Activated T-helper 1 cell treated with anti-CD3 and anti-CD28 coated beads, Interleukin-12 subunit alpha, Interleukin-12 subunit beta, Interleukin-2, Interleukin-4 antibody, amounts not matched to agents 30 ng/mL and 10 ng/mL and 1 ng/mL, durations not matched to agents 14 hours and 24 hours and 36 hours (primary cell): ENCODE measurements at regions of chr1 and their contacts with region 1.

Region 1: GRCh38 chr1:109161858-109162606 is 48.1 kb downstream of the ELAPOR1 start:
- DNase-seq: peak; percentile 52
- H3K4me3 Mint-ChIP-seq: peak overlapping the region; percentile 47
- H3K27ac Mint-ChIP-seq: peak overlapping the region; percentile 71
- H3K4me1 Mint-ChIP-seq: peaks cover 30% of the 10 kb centered on the region
- H3K27me3 Mint-ChIP-seq: peaks cover 2% of the 10 kb centered on the region

Region 2: GRCh38 chr1:109011335-109011734 is 150.7 kb before region 1 on chr1:
- intact Hi-C with region 1: no loop called
- DNase-seq: no peak
- H3K4me3 Mint-ChIP-seq: no peak overlapping the region
- H3K27ac Mint-ChIP-seq: no peak overlapping the region
- H3K4me1 Mint-ChIP-seq: no peaks in the 10 kb centered on the region
- H3K27me3 Mint-ChIP-seq: no peaks in the 10 kb centered on the region

Region 3: DNA sequence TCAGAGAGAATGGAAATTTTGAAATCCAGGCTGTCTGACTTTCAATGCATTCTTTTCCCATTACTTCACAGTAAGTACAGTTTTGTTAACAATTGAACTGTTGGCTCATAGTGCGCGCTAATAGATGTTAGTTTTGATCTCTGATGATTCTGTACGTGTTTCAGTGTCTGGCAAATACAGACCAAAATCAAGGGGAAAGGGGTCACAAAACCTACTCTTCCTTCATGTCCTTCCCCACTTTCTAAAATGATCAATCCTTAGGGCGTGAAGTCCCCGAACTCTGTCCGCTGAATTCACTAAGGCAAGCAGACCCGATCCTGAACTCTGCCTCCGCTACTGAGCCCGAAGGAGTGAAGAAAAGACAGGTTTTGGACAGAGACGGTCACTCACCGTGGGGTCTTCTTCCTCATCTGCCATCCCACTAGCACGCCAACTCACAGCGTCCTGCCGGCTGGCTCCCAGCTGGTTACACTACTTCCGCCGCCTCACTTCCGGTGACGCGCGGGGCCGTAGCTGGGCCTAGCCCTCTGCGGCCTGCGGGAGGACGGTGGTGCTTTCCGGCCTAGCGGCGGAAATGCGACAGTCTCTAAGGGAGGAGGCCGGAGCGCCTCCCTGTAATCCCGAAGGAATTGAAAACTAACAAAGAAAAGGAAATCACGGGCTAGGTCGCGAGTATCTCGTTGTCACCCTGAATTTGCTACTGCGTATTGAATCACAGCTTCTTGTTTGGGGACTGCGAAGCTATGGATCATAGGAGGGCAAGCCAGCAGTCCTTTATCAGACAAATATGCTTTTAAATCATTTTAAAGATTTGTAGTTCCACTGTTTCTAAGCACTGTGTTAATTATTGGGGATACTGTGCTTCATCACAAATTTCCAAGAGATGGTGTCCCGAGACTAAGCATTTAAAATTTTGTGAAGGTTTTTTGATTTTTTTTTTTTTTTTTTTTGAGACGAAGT is 86.2 kb before region 1 on chr1 and contains the start of gene TAF13:
- intact Hi-C with region 1: loop called (anchors 1 kb)
- DNase-seq: peak; percentile 87
- H3K4me3 Mint-ChIP-seq: peak within 1 kb of the TSS; percentile 99
- H3K27ac Mint-ChIP-seq: peak within 1 kb of the TSS; percentile 88
- H3K4me1 Mint-ChIP-seq: peaks cover 20% of the 10 kb centered on the region
- H3K27me3 Mint-ChIP-seq: peaks cover 1% of the 10 kb centered on the region
- total RNA-seq, gene TAF13: 28.8 and 32.6 TPM in 2 replicates

Region 4: GRCh38 chr1:109099938-109100773 is 61.9 kb before region 1 on chr1:
- intact Hi-C with region 1: loop called (anchors 2 kb)
- DNase-seq: peak; percentile 95
- H3K4me3 Mint-ChIP-seq: peak overlapping the region; percentile 97
- H3K27ac Mint-ChIP-seq: peak overlapping the region; percentile 98
- H3K4me1 Mint-ChIP-seq: peaks cover 10% of the 10 kb centered on the region
- H3K27me3 Mint-ChIP-seq: no peaks in the 10 kb centered on the region

Region 5: DNA sequence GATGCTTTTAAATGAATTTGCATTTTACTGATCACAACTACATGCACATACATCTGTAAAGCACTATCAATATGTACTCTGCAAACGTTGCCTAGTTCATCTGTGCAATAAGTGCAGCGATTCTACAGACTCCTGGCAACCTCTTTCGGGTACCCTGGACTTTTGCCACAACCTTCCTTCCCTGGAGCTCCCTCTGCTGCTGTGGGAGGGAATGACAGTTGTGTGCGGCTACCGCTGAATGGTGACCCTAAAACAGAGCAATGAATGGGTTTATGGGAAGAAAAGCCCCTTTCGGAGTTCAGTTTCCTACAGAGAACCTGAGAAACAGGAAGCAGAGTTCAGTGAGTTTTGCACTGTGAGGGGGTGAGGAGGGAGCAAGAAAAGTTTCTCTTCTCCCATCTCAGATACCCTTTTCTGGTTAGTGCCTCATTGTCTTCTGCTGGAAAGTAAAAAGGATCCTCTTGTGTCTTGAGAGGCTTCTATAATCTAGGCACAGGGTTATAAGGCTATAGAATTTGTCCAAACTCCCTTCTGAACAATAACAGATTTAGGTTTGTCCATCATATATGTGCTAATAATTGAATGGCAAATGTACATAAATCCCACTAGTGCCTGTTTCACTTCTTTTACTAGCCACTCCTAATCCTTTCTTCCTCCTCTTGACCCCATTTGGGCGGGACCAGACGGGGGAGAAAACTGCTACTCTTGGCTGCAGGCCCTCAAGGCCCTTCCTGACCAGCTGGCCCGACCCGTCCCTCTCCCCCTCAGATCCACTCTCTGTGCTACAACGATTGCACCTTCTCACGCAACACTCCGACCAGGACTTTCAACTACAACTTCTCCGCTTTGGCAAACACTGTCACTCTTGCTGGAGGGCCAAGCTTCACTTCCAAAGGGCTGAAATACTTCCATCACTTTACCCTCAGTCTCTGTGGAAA is 31.9 kb after region 1 on chr1:
- intact Hi-C with region 1: loop called (anchors 2 kb)
- DNase-seq: peak; percentile 55
- H3K4me3 Mint-ChIP-seq: no peak overlapping the region
- H3K27ac Mint-ChIP-seq: no peak overlapping the region
- H3K4me1 Mint-ChIP-seq: peaks cover 21% of the 10 kb centered on the region
- H3K27me3 Mint-ChIP-seq: no peaks in the 10 kb centered on the region

Region 6: DNA sequence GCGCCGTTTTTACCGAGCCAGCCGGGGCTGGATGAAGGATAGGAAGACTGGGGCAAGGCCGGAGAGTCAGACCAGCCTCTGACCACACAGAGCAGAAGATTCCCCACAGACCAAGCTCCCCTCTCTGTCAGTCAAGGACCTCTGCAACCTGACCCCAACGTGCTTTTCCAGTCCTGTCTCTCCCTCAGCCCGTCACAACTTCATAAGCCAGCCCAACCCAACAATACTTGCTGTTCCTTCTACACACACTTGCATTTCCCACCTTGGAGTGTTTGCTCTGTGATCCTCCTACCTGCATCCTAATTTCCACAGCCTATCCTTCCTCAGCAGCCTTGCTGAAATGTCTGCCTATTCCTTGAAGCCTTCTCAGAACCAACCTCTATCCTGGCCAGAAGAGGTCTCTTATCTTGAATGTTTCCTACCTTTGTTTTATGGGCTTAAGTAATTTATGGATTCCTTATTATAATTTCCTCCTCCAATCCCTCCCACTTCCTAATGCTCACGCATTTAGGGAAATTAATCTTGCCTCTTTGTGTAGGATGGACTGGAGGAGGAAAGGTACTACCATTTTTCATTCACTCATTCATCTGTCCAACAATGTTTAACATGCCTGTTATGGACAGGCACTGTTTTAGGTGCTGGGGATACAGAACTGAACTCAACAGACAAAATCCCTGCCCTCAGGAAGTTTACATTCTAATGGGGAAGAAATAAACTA is 578.8 kb after region 1 on chr1 and contains the start of gene GSTM3:
- intact Hi-C with region 1: no loop called
- DNase-seq: no peak
- H3K4me3 Mint-ChIP-seq: peak within 1 kb of the TSS; percentile 77
- H3K27ac Mint-ChIP-seq: peak within 1 kb of the TSS; percentile 52
- H3K4me1 Mint-ChIP-seq: peaks cover 14% of the 10 kb centered on the region
- H3K27me3 Mint-ChIP-seq: peaks cover 27% of the 10 kb centered on the region
- total RNA-seq, gene GSTM3: 10.1 and 11.0 TPM in 2 replicates

Region 7: GRCh38 chr1:110338309-110338885 is 1176.4 kb after region 1 on chr1:
- intact Hi-C with region 1: no loop called
- DNase-seq: peak; percentile 93
- H3K4me3 Mint-ChIP-seq: no peak overlapping the region
- H3K27ac Mint-ChIP-seq: peak overlapping the region; percentile 98
- H3K4me1 Mint-ChIP-seq: peaks cover 49% of the 10 kb centered on the region
- H3K27me3 Mint-ChIP-seq: no peaks in the 10 kb centered on the region